ENCODE measurements at regions of chr3 and their contacts with region 1.

Region 1: DNA sequence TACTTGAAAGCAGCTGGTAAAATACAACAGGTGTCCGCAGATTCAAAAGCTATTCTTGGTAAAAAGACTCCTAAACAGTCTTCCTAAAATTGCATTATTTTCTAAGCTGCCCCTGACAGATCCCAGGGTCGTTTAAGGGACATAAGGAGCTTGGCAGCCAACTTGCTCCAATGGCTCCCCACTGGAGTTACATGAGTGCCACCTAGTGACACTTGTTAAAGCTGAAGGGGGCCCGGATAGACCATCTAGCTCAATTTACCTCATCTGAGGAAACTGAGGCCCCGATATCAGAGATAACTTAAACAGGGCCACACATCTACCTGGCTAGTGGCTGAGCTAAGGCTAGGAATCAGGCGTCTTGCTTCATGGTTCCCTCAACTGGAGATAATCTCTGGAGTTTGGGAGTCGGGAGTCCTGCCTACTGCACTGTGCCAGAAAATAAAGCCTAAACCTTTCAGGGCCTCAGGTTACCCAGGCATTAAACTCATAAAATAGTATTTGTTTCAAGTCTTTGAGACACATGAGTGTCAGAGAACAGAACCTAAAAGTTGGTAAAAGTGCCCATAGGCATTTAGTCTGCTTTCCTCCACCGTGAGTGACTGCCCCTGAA is 6.5 kb upstream of the TBC1D23 start:
- DNase-seq: peak in 3 of 4 donors; percentile 37 to 83 (median 67)
- ATAC-seq: peak; percentile 93
- H3K4me3 ChIP-seq: no peak overlapping the region
- H3K27ac ChIP-seq: no peak overlapping the region
- H3K4me1 ChIP-seq: peaks cover 0 to 5% of the 10 kb centered on the region in 2 donors
- H3K27me3 ChIP-seq: no peaks in the 10 kb centered on the region
- CTCF ChIP-seq: peak; percentile 37 to 67

Region 2: GRCh38 chr3:99842826-99843589 is 411.3 kb before region 1 on chr3:
- intact Hi-C with region 1: loop called in 1 of 2 experiments (anchors 5 kb)
- DNase-seq: peak in 1 of 4 donors; percentile 32
- ATAC-seq: peak; percentile 87
- H3K4me3 ChIP-seq: no peak overlapping the region
- H3K27ac ChIP-seq: peak overlapping the region in 1 of 2 donors; percentile 65
- H3K4me1 ChIP-seq: peaks cover 19 to 28% of the 10 kb centered on the region in 2 donors
- H3K27me3 ChIP-seq: no peaks in the 10 kb centered on the region
- CTCF ChIP-seq: peak; percentile 25 to 56

Region 3: GRCh38 chr3:100068826-100069225 is 185.4 kb before region 1 on chr3:
- intact Hi-C with region 1: loop called in 1 of 2 experiments (anchors 5 kb)
- DNase-seq: peak in 3 of 4 donors; percentile 78 to 87 (median 84)
- ATAC-seq: peak; percentile 97
- H3K4me3 ChIP-seq: no peak overlapping the region
- H3K27ac ChIP-seq: peak overlapping the region; percentile 14 to 67
- H3K4me1 ChIP-seq: peaks cover 7 to 44% of the 10 kb centered on the region in 2 donors
- H3K27me3 ChIP-seq: no peaks in the 10 kb centered on the region
- CTCF ChIP-seq: peak; percentile 78 to 80

Region 4: DNA sequence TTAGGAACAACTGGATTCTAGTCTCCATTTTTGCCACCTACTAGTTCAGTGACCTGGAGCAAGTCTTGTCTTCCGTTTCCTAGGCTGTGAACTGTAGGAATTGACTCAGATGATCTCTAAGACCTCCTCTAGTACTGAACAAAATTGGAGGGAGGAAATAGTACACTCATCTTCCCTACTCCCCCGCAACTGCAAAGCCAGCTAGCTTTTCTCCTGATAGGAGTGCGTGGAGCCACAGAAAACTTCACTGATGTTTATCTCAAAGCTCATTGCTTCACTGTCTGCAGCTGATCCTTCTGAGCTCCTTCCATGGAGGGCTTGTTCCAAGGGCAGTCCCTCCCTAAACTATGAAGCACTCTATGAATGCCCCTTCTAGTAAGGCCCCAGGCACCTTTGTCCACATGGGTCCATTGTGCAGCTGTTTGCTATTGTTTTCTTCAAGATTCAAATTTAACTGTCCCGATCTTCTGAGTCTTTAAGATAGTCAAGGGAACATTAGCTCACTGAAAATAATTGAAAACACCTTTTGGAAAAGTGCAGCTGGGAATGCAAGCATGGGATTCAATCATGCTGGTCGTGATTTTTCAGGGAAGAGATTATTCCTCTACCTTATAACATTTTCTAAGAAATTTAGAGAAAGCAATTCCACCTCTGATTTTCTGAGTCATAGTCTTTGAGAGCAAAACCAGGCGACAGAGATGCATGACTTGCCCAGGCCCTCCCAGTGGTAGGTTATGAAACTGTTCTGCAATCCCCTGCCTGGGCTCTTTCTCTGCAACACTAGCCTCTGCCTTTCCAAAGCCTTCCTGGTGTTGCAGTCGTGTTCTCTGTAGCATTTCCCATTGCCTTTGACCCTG is 164.2 kb before region 1 on chr3:
- intact Hi-C with region 1: no loop called
- DNase-seq: no peak
- ATAC-seq: peak; percentile 76
- H3K4me3 ChIP-seq: no peak overlapping the region
- H3K27ac ChIP-seq: peak overlapping the region in 1 of 2 donors; percentile 45
- H3K4me1 ChIP-seq: peaks cover 0 to 12% of the 10 kb centered on the region in 2 donors
- H3K27me3 ChIP-seq: no peaks in the 10 kb centered on the region
- CTCF ChIP-seq: peak; percentile 42 to 46

Region 5: DNA sequence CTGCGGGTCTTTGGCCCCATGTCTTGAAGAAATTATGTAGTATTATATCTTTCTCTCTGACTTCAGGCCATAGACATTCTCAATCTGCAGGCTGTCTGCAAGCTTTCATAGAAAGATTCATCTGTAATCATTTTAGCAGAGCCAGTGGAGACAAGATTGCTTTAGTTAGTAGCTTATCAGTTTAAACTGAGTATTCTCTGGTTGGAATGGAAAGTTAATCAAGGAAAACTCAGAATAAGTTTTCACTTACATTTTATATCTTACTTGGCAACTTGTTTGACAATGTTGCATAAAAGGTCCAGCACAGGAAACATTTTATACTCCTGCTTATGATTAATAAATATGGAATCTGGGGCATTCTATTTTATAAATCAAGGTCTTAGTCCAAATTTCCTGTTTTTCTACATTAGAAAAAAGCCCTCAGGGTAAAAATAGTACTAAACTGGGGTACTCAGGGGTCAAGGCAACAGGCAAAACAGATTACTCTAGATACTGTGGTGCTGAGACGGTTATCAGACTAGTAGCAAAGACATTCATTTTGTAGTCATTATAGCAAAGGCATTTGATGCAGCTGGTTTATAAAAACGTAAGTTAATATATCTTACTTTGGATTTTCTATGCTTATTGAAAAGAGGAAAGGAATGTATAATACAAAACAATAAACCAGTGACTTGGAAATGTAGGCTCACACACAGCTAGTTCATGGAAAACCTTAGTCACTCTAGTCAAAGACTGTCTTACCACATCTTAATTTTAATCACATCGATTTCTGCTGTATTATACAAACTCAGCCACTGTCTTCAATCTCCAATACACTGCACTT is 94.7 kb before region 1 on chr3:
- intact Hi-C with region 1: loop called in 1 of 2 experiments (anchors 10 kb)
- DNase-seq: no peak
- ATAC-seq: no peak
- H3K4me3 ChIP-seq: no peak overlapping the region
- H3K27ac ChIP-seq: peak overlapping the region in 1 of 2 donors; percentile 50
- H3K4me1 ChIP-seq: no peaks in the 10 kb centered on the region
- H3K27me3 ChIP-seq: no peaks in the 10 kb centered on the region
- CTCF ChIP-seq: no peak

Region 6: DNA sequence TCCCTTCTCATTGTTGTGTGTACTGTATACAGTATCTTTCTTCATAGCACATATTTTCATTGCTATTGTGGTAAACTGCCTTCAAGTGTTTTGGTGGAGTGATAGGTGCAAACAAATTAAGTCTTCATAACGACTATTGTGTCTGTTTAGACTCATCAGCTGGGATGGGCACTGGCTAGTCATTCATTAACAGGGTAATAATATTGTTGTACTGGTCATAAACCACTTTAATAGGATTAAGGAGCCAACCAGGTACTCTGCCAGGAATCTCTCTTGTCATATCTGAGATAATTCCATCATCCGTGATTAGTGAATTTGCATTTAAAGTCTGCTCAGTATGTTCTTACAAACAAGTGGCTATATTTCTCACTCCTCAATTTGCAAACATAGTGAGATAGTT is 227.9 kb after region 1 on chr3:
- intact Hi-C with region 1: no loop called
- DNase-seq: no peak
- ATAC-seq: no peak
- H3K4me3 ChIP-seq: no peak overlapping the region
- H3K27ac ChIP-seq: no peak overlapping the region
- H3K4me1 ChIP-seq: no peaks in the 10 kb centered on the region
- H3K27me3 ChIP-seq: no peaks in the 10 kb centered on the region
- CTCF ChIP-seq: no peak

Measured in left lung (tissue), 14 donors.